ENCODE measurements at regions of chr11 and their contacts with region 1.

Region 1: GRCh38 chr11:69718147-69718546 is 14.3 kb upstream of the FGF19 start:
- DNase-seq: peak; percentile 85
- ATAC-seq: peak; percentile 88
- H3K4me3 Mint-ChIP-seq: no peak overlapping the region
- H3K27ac Mint-ChIP-seq: no peak overlapping the region
- H3K4me1 Mint-ChIP-seq: peaks cover 17% of the 10 kb centered on the region
- H3K27me3 Mint-ChIP-seq: peaks cover 27% of the 10 kb centered on the region
- CTCF ChIP-seq: peak; percentile 75

Region 2: GRCh38 chr11:69598157-69598556 is 120.0 kb before region 1 on chr11:
- CTCF ChIA-PET with region 1: no interaction called
- POLR2A ChIA-PET with region 1: no interaction called
- DNase-seq: no peak
- ATAC-seq: peak; percentile 41
- H3K4me3 Mint-ChIP-seq: no peak overlapping the region
- H3K27ac Mint-ChIP-seq: no peak overlapping the region
- H3K4me1 Mint-ChIP-seq: peaks cover 10% of the 10 kb centered on the region
- H3K27me3 Mint-ChIP-seq: no peaks in the 10 kb centered on the region; the same call in 1 of the 2 replicates
- CTCF ChIP-seq: no peak

Region 3: GRCh38 chr11:69662017-69662698 is 56.0 kb before region 1 on chr11:
- CTCF ChIA-PET with region 1: no interaction called
- POLR2A ChIA-PET with region 1: no interaction called
- DNase-seq: peak; percentile 26
- ATAC-seq: peak; percentile 49
- H3K4me3 Mint-ChIP-seq: no peak overlapping the region
- H3K27ac Mint-ChIP-seq: peak overlapping the region; percentile 17; the same call in 1 of the 2 replicates
- H3K4me1 Mint-ChIP-seq: peaks cover 19% of the 10 kb centered on the region
- H3K27me3 Mint-ChIP-seq: no peaks in the 10 kb centered on the region
- CTCF ChIP-seq: no peak; the same call in 1 of the 2 replicates

Region 4: GRCh38 chr11:69801519-69802335 is 83.6 kb after region 1 on chr11:
- CTCF ChIA-PET with region 1: interaction called, 14 read pairs
- POLR2A ChIA-PET with region 1: no interaction called
- DNase-seq: peak; percentile 95
- ATAC-seq: peak; percentile 83
- H3K4me3 Mint-ChIP-seq: no peak overlapping the region
- H3K27ac Mint-ChIP-seq: no peak overlapping the region
- H3K4me1 Mint-ChIP-seq: no peaks in the 10 kb centered on the region
- H3K27me3 Mint-ChIP-seq: no peaks in the 10 kb centered on the region; the same call in 1 of the 2 replicates
- CTCF ChIP-seq: peak; percentile 97

Region 5: GRCh38 chr11:69817265-69818230 is 99.4 kb after region 1 on chr11:
- CTCF ChIA-PET with region 1: interaction called, 3 read pairs
- POLR2A ChIA-PET with region 1: interaction called, 10 read pairs
- DNase-seq: peak; percentile 43
- ATAC-seq: peak; percentile 27
- H3K4me3 Mint-ChIP-seq: peak overlapping the region; percentile 50
- H3K27ac Mint-ChIP-seq: no peak overlapping the region
- H3K4me1 Mint-ChIP-seq: peaks cover 7% of the 10 kb centered on the region; the same call in 1 of the 2 replicates
- H3K27me3 Mint-ChIP-seq: peaks cover 90% of the 10 kb centered on the region
- CTCF ChIP-seq: no peak

Region 6: GRCh38 chr11:69841859-69842698 is 123.9 kb after region 1 on chr11:
- CTCF ChIA-PET with region 1: interaction called, 12 read pairs
- POLR2A ChIA-PET with region 1: interaction called, 5 read pairs
- DNase-seq: peak; percentile 65
- ATAC-seq: peak; percentile 73
- H3K4me3 Mint-ChIP-seq: no peak overlapping the region
- H3K27ac Mint-ChIP-seq: no peak overlapping the region
- H3K4me1 Mint-ChIP-seq: peaks cover 4% of the 10 kb centered on the region
- H3K27me3 Mint-ChIP-seq: no peaks in the 10 kb centered on the region; the same call in 1 of the 2 replicates
- CTCF ChIP-seq: peak; percentile 37; the same call in 1 of the 2 replicates

Region 7: GRCh38 chr11:69881449-69882269 is 163.5 kb after region 1 on chr11:
- CTCF ChIA-PET with region 1: interaction called, 18 read pairs
- POLR2A ChIA-PET with region 1: no interaction called
- DNase-seq: peak; percentile 56
- ATAC-seq: peak; percentile 75
- H3K4me3 Mint-ChIP-seq: no peak overlapping the region
- H3K27ac Mint-ChIP-seq: no peak overlapping the region
- H3K4me1 Mint-ChIP-seq: 0 out of 2 replicates have a peak, but pooled peaks cover 2% of the 10 kb centered on the region
- H3K27me3 Mint-ChIP-seq: no peaks in the 10 kb centered on the region
- CTCF ChIP-seq: no peak; the same call in 1 of the 2 replicates

Region 8: GRCh38 chr11:69888483-69889076 is 170.4 kb after region 1 on chr11:
- CTCF ChIA-PET with region 1: interaction called, 18 read pairs
- POLR2A ChIA-PET with region 1: no interaction called
- DNase-seq: peak; percentile 92
- ATAC-seq: peak; percentile 58
- H3K4me3 Mint-ChIP-seq: no peak overlapping the region
- H3K27ac Mint-ChIP-seq: no peak overlapping the region
- H3K4me1 Mint-ChIP-seq: peaks cover 35% of the 10 kb centered on the region
- H3K27me3 Mint-ChIP-seq: peaks cover 31% of the 10 kb centered on the region
- CTCF ChIP-seq: peak; percentile 95

Measured in WTC11 (cell line).